Sigmoid colon (tissue), 7 donors: ENCODE measurements at regions of chrX and their contacts with region 1.

Region 1: DNA sequence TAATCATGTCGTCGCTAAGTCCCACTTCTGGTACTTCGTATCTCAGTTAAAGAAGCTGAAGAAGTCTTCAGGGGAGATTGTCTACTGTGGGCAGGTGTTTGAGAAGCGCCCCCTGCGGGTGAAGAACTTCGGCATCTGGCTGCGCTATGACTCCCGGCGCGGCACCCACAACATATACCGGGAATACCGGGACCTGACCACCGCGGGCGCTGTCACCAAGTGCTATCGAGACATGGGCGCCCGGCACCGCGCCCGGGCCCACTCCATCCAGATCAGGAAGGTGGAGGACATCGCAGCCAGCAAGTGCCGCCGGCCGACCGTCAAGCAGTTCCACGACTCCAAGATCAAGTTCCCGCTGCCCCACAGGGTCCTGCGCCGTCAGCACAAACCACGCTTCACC is 11.3 kb downstream of the PNCK start:
- DNase-seq: peak; percentile 71
- H3K4me3 ChIP-seq: peak overlapping the region in 1 of 4 donors; percentile 28
- H3K27ac ChIP-seq: no peak overlapping the region
- H3K4me1 ChIP-seq: no peaks in the 10 kb centered on the region
- H3K27me3 ChIP-seq: peaks cover 0 to 18% (median 9%) of the 10 kb centered on the region in 3 donors
- CTCF ChIP-seq: peak in 2 of 4 experiments; percentile 19 to 41
- EP300 ChIP-seq: no peak
- POLR2A ChIP-seq: no peak

Region 2: GRCh38 chrX:153423652-153424051 is 238.6 kb before region 1 on chrX:
- intact Hi-C with region 1: no loop called
- DNase-seq: no peak
- H3K4me3 ChIP-seq: no peak overlapping the region
- H3K27ac ChIP-seq: no peak overlapping the region
- H3K4me1 ChIP-seq: no peaks in the 10 kb centered on the region
- H3K27me3 ChIP-seq: no peaks in the 10 kb centered on the region
- CTCF ChIP-seq: no peak
- EP300 ChIP-seq: no peak
- POLR2A ChIP-seq: no peak

Region 3: GRCh38 chrX:153539171-153539978 is 122.9 kb before region 1 on chrX:
- intact Hi-C with region 1: loop called (anchors 5 kb)
- DNase-seq: peak; percentile 81
- H3K4me3 ChIP-seq: no peak overlapping the region
- H3K27ac ChIP-seq: no peak overlapping the region
- H3K4me1 ChIP-seq: no peaks in the 10 kb centered on the region
- H3K27me3 ChIP-seq: peaks cover 0 to 2% (median 0%) of the 10 kb centered on the region in 3 donors
- CTCF ChIP-seq: peak; percentile 34 to 69 (median 66)
- EP300 ChIP-seq: no peak
- POLR2A ChIP-seq: no peak